ENCODE measurements at regions of chr3 and their contacts with region 1.

Region 1: DNA sequence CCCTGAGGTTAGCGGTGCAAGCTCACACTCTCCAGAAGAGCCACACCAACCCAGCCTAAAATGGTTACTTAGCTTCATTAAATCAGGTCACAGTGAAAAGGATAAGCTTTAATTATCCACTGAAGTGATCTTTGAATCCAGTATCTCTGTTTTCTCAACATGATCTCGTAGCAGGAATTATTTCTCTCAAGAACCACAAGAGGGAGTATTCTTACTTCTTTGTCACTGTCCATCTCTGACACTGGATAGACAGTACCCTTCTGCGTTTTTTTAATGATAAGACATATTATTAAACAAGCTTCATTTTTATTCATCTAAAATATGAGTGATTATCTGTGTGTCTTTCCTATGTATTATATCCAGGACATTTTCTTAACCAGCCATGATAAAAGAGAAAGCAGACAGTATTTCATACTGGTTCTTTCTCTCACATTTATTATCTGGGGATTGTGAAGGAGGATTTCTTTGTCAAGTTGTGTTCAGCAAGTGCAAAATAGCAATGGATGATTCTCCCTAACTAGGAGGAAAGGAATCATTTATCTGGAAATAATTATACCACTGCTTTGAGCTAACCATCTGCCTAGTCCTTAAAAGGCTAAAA is 105.4 kb upstream of the CCDC54 start:
- DNase-seq: peak; percentile 31 to 56 (median 51)
- H3K4me3 ChIP-seq: no peak overlapping the region
- H3K27ac ChIP-seq: no peak overlapping the region
- H3K4me1 ChIP-seq: peaks cover 0 to 12% (median 4%) of the 10 kb centered on the region in 4 experiments
- H3K27me3 ChIP-seq: no peaks in the 10 kb centered on the region

Region 2: GRCh38 chr3:106936001-106936736 is 335.7 kb before region 1 on chr3:
- CTCF ChIA-PET with region 1: no interaction called
- POLR2A ChIA-PET with region 1: no interaction called
- DNase-seq: no peak
- H3K4me3 ChIP-seq: no peak overlapping the region
- H3K27ac ChIP-seq: no peak overlapping the region
- H3K4me1 ChIP-seq: no peaks in the 10 kb centered on the region
- H3K27me3 ChIP-seq: no peaks in the 10 kb centered on the region

Region 3: DNA sequence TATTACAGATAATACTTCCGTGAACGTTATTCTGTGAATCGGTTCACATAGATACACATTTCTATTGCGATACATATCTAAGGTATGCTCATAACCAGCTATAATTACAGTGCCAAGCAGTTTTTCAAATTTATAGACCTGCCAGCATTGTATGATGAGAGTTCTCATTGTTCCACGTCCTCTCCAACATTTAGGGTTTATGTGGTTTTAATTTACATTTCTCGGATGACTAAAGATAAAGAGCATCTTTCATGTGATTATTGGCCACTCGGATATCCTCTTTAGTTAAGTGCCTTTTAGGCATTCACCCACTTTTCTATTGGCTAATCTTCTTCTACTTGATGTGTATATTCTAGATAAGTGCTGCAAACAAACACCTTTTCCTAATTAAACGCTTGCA is 29.3 kb before region 1 on chr3:
- CTCF ChIA-PET with region 1: interaction called, 34 read pairs
- POLR2A ChIA-PET with region 1: no interaction called
- DNase-seq: no peak
- H3K4me3 ChIP-seq: no peak overlapping the region
- H3K27ac ChIP-seq: no peak overlapping the region
- H3K4me1 ChIP-seq: peaks cover 0 to 18% (median 6%) of the 10 kb centered on the region in 4 experiments
- H3K27me3 ChIP-seq: no peaks in the 10 kb centered on the region

Region 4: GRCh38 chr3:107258300-107258699 is 13.6 kb before region 1 on chr3:
- CTCF ChIA-PET with region 1: interaction called, 15 read pairs
- POLR2A ChIA-PET with region 1: interaction called, 3 read pairs
- DNase-seq: no peak
- H3K4me3 ChIP-seq: no peak overlapping the region
- H3K27ac ChIP-seq: no peak overlapping the region
- H3K4me1 ChIP-seq: no peaks in the 10 kb centered on the region
- H3K27me3 ChIP-seq: no peaks in the 10 kb centered on the region

Region 5: GRCh38 chr3:107412376-107412775 is 140.5 kb after region 1 on chr3:
- CTCF ChIA-PET with region 1: interaction called, 117 read pairs
- POLR2A ChIA-PET with region 1: no interaction called
- DNase-seq: no peak
- H3K4me3 ChIP-seq: no peak overlapping the region
- H3K27ac ChIP-seq: no peak overlapping the region
- H3K4me1 ChIP-seq: no peaks in the 10 kb centered on the region
- H3K27me3 ChIP-seq: no peaks in the 10 kb centered on the region

Region 6: DNA sequence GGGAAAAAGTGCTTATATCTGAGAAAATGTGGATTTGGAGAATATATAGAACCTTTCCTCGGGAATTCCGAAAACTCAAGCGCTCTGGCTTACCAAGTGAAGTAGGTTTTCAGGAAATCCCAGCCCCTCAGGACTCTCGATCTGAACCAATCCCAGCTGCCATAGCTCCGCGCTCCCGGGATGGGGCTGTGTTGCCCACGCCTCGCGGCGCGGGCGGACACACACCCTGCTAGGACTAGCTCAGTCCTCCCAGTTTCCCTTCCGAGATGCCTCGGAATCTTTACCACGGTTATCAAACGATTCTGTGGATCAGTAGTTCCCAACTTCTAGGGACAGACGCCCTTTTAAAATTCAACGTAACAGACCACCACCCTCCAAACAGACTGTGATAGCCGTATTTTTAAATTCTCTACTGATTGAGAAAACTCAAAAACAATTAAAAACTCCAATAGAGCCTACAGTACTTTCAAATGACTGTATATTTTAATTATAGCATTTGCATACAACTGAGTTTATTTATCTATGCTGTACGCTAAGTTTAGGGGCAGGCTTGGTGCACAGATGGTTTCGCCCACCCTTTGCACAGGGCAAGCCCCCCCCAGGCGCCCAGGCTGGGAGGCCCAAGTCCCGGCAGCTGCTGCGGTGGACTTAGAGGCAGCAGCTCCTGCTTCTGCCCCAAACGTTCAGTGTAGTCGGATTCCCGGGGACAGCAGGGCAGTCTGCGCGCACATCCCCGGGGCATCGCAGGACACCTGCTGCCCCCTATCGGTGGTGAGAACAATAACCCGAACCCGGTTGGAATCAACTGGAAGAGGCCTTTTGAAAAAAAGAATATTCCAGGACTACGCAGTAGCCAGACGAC is 157.7 kb after region 1 on chr3:
- CTCF ChIA-PET with region 1: interaction called, 82 read pairs
- POLR2A ChIA-PET with region 1: interaction called, 3 read pairs
- DNase-seq: peak; percentile 81 to 87 (median 87)
- H3K4me3 ChIP-seq: peak overlapping the region in 6 of 7 experiments; percentile 33 to 95 (median 82)
- H3K27ac ChIP-seq: no peak overlapping the region
- H3K4me1 ChIP-seq: peaks cover 8 to 31% (median 22%) of the 10 kb centered on the region in 4 experiments
- H3K27me3 ChIP-seq: no peaks in the 10 kb centered on the region

Region 7: DNA sequence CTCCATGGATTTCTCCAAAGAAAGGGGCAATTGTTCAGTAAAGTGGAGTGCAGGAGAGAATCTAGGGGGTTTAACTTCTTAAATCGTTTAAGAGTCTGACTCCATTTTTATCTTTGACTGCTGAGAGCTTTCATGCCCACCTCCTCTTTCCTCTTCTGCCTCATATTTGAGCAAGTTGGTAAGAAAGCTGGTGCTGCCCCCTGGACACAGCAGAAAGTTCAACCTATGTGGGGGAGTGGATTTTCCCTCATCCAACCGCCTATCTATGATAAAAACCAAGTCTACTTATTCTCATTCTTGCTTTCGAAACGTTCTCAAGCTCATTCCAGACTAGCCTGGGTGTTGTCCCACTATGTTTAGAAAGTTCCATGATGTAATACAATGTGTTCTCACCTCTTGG is 1050.5 kb after region 1 on chr3:
- CTCF ChIA-PET with region 1: no interaction called
- POLR2A ChIA-PET with region 1: no interaction called
- DNase-seq: peak; percentile 49 to 69 (median 65)
- H3K4me3 ChIP-seq: no peak overlapping the region
- H3K27ac ChIP-seq: no peak overlapping the region
- H3K4me1 ChIP-seq: peaks cover 0 to 6% (median 0%) of the 10 kb centered on the region in 4 experiments
- H3K27me3 ChIP-seq: no peaks in the 10 kb centered on the region